Lower leg skin (tissue), 4 donors: ENCODE measurements at regions of chr6 and their contacts with region 1.

Region 1: GRCh38 chr6:149941583-149942431 is at the start of gene ULBP2:
- DNase-seq: peak; percentile 77 to 97
- H3K4me3 ChIP-seq: peak within 1 kb of the TSS; percentile 37
- CTCF ChIP-seq: no peak
- POLR2A ChIP-seq: no peak
- total RNA-seq, gene ULBP2: 0.25 to 0.68 TPM in 2 of 4 donors, not detected in the others

Region 2: DNA sequence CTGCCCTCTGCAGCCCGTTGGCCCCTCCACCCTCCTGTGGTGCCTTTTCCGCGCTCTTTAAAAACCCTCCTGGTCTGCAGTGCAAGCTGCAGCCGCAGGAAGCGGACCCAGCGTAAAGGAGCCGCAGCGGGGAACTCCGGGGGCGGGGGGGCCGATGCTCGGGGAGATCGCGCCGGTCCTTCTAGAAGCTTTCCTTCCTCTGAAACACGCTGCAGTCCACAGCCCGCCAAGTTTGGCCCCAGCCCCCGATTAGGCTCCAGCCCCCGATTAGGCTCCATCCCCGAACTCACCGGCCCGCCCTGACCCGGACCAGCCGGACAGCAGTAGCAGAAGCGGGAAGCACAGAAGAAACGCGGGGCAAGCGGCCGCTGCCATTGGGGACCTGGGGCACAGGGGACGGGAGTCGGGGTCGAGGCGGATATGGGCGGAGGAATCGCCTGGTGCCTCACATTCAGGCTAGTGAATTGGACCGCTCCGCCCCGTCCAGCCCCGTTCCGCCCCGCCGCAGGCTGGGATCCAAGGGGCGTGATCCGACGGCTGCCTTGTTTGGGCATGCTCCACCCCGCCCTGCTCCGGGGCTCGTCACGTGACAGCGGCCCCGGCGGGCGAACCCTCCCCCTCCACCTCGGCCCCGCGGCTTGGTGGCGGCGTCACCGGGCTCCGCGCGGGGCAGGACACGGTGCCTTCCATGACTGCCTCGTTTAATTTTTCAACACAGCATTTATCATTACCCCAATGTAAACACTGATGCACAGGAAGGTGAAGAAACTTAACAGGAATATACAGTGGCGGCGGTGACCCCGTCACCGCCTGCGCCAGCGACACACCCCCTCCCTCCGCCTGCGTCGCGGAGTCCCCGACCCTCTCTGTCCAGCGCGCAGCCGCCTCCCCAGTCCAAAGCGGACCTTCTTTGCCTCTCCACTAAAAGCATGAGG is 63.2 kb after region 1 on chr6:
- intact Hi-C with region 1: loop called (anchors 5 kb)
- DNase-seq: peak; percentile 88 to 98
- H3K4me3 ChIP-seq: peak overlapping the region; percentile 41
- CTCF ChIP-seq: no peak
- POLR2A ChIP-seq: no peak